GM12878 (cell line): ENCODE measurements at regions of chr7 and their contacts with region 1.

Region 1: GRCh38 chr7:726084-726853 is at the start of gene DNAAF5:
- DNase-seq: peak; percentile 45
- ATAC-seq: peak; percentile 94
- H3K4me3 ChIP-seq: peak within 1 kb of the TSS; percentile 91
- H3K27ac ChIP-seq: peak within 1 kb of the TSS; percentile 83
- H3K4me1 ChIP-seq: peaks cover 14% of the 10 kb centered on the region
- H3K27me3 ChIP-seq: no peaks in the 10 kb centered on the region
- CTCF ChIP-seq: no peak
- EP300 ChIP-seq: no peak
- POLR2A ChIP-seq: peak; percentile 85
- RAD21 ChIP-seq: no peak
- polyA plus RNA-seq, gene DNAAF5: 1.8 to 5.3 TPM

Region 2: GRCh38 chr7:604001-604883 is 122.0 kb before region 1 on chr7:
- CTCF ChIA-PET with region 1: no interaction called
- POLR2A ChIA-PET with region 1: no interaction called
- RAD21 ChIA-PET with region 1: interaction called, 3 read pairs
- SMC1A ChIA-PET with region 1: no interaction called
- in situ Hi-C with region 1: no loop called
- intact Hi-C with region 1: loop called (anchors 2 kb)
- DNase-seq: peak; percentile 71
- ATAC-seq: peak; percentile 81
- H3K4me3 ChIP-seq: peak overlapping the region; percentile 80
- H3K27ac ChIP-seq: peak overlapping the region; percentile 98
- H3K4me1 ChIP-seq: peaks cover 49% of the 10 kb centered on the region
- H3K27me3 ChIP-seq: no peaks in the 10 kb centered on the region
- CTCF ChIP-seq: no peak
- EP300 ChIP-seq: no peak; a peak in 1 of 4 replicates
- POLR2A ChIP-seq: peak; percentile 96
- RAD21 ChIP-seq: no peak

Region 3: GRCh38 chr7:767941-768731 is 41.9 kb after region 1 on chr7:
- CTCF ChIA-PET with region 1: no interaction called
- POLR2A ChIA-PET with region 1: no interaction called
- RAD21 ChIA-PET with region 1: no interaction called
- SMC1A ChIA-PET with region 1: no interaction called
- in situ Hi-C with region 1: no loop called
- intact Hi-C with region 1: no loop called
- DNase-seq: no peak
- ATAC-seq: no peak
- H3K4me3 ChIP-seq: no peak overlapping the region
- H3K27ac ChIP-seq: no peak overlapping the region
- H3K4me1 ChIP-seq: no peaks in the 10 kb centered on the region
- H3K27me3 ChIP-seq: no peaks in the 10 kb centered on the region
- CTCF ChIP-seq: no peak
- EP300 ChIP-seq: no peak
- POLR2A ChIP-seq: no peak; the same call in 1 of the 2 replicates
- RAD21 ChIP-seq: no peak